ENCODE measurements at regions of chr15 and their contacts with region 1.

Region 1: DNA sequence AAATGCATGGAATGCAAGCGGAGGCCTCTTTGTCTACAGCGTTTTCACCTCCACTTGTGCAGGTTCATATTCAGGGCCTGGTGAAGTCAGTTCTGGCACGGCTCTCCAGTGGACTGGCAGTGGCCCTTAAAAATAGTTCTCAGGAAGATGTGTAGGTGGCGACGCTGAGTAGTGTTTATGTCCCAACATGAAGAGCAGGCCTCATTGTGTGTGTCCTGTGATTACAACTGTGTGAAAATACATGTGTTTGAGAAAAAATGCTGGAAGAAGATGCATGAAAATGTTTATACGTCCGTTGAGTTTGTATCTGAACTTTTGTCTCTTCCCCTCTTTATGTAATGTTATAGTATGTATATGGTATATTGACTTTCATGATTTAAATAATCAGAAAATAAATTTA is 7.2 kb downstream of the LIPC start:
- DNase-seq: peak; percentile 47 to 72 (median 52)
- ATAC-seq: peak; percentile 92
- H3K4me3 ChIP-seq: no peak overlapping the region
- H3K27ac ChIP-seq: no peak overlapping the region
- H3K4me1 ChIP-seq: peaks cover 6 to 21% of the 10 kb centered on the region in 2 experiments
- H3K27me3 ChIP-seq: no peaks in the 10 kb centered on the region
- CTCF ChIP-seq: peak; percentile 49 to 66 (median 60); a peak in 5 of 6 replicates
- EP300 ChIP-seq: no peak
- POLR2A ChIP-seq: no peak
- RAD21 ChIP-seq: peak; percentile 56 to 72

Region 2: DNA sequence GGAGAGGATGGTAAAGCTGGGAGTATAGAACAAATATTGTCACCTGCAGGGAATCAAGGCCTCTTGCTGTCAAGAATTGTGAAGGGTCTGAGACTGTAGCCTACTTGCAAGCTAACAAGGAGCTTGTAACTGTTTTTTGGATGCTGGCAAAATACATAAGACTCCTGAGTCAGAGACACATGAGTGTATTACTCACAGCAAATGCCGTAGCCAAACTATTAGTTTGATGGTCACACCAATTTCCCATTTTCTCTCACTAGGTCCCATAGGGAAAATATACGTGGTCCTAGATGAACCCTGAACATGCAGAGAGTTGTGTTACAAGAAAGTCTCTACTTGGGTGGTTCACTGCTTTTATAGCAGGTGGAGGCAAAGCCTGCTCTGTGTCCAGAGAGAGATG is 51.8 kb before region 1 on chr15:
- CTCF ChIA-PET with region 1: interaction called, 3 read pairs
- POLR2A ChIA-PET with region 1: no interaction called
- in situ Hi-C with region 1: no loop called
- intact Hi-C with region 1: loop called (anchors 10 kb)
- DNase-seq: no peak
- ATAC-seq: no peak
- H3K4me3 ChIP-seq: no peak overlapping the region
- H3K27ac ChIP-seq: no peak overlapping the region
- H3K4me1 ChIP-seq: peaks cover 0 to 4% of the 10 kb centered on the region in 2 experiments; a peak in 3 of 5 replicates
- H3K27me3 ChIP-seq: no peaks in the 10 kb centered on the region
- CTCF ChIP-seq: no peak
- EP300 ChIP-seq: no peak
- POLR2A ChIP-seq: no peak
- RAD21 ChIP-seq: no peak

Region 3: DNA sequence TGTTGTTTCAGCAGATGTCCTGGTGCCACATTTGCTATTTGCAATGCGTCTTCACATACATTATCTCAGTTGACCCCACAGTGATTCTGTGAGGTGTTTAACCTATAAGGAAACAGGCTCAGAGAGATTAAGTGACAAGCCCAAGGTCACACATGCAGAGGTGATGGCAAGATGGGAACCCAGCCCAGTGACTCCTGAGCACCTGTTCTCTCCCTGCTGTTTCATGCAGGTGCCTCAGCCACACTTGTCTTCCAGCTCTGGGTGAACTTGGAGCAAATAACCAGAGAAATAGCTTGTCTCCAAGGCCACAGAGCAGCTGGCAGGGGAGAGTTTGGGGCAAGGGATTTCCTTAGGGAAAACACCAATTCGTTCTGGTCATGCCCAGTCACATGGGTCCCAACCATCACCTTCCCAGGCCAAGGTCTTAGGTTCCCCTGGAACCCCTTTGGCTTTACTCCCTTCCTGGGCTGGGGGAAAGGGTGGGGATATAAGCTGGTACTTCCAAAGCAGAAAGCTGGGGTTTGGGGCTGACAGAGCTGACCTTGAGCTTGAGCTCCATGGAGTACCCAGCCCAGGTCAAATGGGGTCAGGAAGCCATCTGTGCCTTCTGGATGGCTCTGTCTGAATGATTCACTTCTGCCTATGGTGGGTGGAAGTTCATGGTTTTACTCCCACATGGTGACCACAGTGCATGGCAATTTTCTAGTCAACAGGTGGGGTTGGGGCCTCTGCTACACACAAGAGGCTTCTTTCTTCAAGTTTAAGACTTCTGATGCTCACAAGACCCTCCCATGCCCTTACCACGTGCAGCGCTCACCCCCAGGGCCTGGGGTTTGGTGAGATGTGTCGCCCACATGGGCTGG is 15.2 kb after region 1 on chr15:
- CTCF ChIA-PET with region 1: no interaction called
- POLR2A ChIA-PET with region 1: no interaction called
- in situ Hi-C with region 1: no loop called
- intact Hi-C with region 1: no loop called
- DNase-seq: peak in 2 of 4 experiments; percentile 25 to 47
- ATAC-seq: 0 out of 3 replicates have a peak, but pooled peaks have one; percentile 36
- H3K4me3 ChIP-seq: no peak overlapping the region
- H3K27ac ChIP-seq: no peak overlapping the region
- H3K4me1 ChIP-seq: peaks cover 0 to 20% of the 10 kb centered on the region in 2 experiments; a peak in 4 of 5 replicates
- H3K27me3 ChIP-seq: no peaks in the 10 kb centered on the region
- CTCF ChIP-seq: no peak
- EP300 ChIP-seq: no peak
- POLR2A ChIP-seq: no peak
- RAD21 ChIP-seq: no peak

Region 4: GRCh38 chr15:58749532-58750337 is 310.8 kb after region 1 on chr15 and contains the start of gene ADAM10:
- CTCF ChIA-PET with region 1: no interaction called
- POLR2A ChIA-PET with region 1: interaction called, 3 read pairs
- in situ Hi-C with region 1: loop called (anchors 10 kb)
- intact Hi-C with region 1: loop called (anchors 10 kb)
- DNase-seq: peak; percentile 99
- ATAC-seq: peak; percentile 87
- H3K4me3 ChIP-seq: peak within 1 kb of the TSS; percentile 89
- H3K27ac ChIP-seq: peak within 1 kb of the TSS; percentile 92
- H3K4me1 ChIP-seq: peaks cover 5 to 19% of the 10 kb centered on the region in 2 experiments; a peak in 4 of 5 replicates
- H3K27me3 ChIP-seq: no peaks in the 10 kb centered on the region
- CTCF ChIP-seq: no peak
- EP300 ChIP-seq: no peak
- POLR2A ChIP-seq: peak; percentile 91
- RAD21 ChIP-seq: no peak
- polyA plus RNA-seq, gene ADAM10: 11.9 to 14.0 TPM

Measured in K562 (cell line).